ENCODE measurements at regions of chr1 and their contacts with region 1.

Region 1: GRCh38 chr1:93288558-93288957 is 57.1 kb upstream of the DR1 start:
- DNase-seq: no peak
- H3K4me3 ChIP-seq: no peak overlapping the region
- H3K27ac ChIP-seq: no peak overlapping the region
- H3K4me1 ChIP-seq: no peaks in the 10 kb centered on the region
- H3K27me3 ChIP-seq: no peaks in the 10 kb centered on the region
- CTCF ChIP-seq: no peak

Region 2: GRCh38 chr1:93395195-93395594 is 106.6 kb after region 1 on chr1:
- CTCF ChIA-PET with region 1: no interaction called
- POLR2A ChIA-PET with region 1: no interaction called
- intact Hi-C with region 1: no loop called
- DNase-seq: no peak
- H3K4me3 ChIP-seq: no peak overlapping the region
- H3K27ac ChIP-seq: no peak overlapping the region
- H3K4me1 ChIP-seq: peaks cover 9% of the 10 kb centered on the region
- H3K27me3 ChIP-seq: no peaks in the 10 kb centered on the region
- CTCF ChIP-seq: no peak

Region 3: GRCh38 chr1:95146637-95147036 is 1858.1 kb after region 1 on chr1:
- CTCF ChIA-PET with region 1: no interaction called
- POLR2A ChIA-PET with region 1: interaction called, 14 read pairs
- intact Hi-C with region 1: no loop called
- DNase-seq: no peak
- H3K4me3 ChIP-seq: no peak overlapping the region
- H3K27ac ChIP-seq: no peak overlapping the region
- H3K4me1 ChIP-seq: no peaks in the 10 kb centered on the region
- H3K27me3 ChIP-seq: no peaks in the 10 kb centered on the region
- CTCF ChIP-seq: no peak